ENCODE measurements at regions of chr2 and their contacts with region 1.

Region 1: DNA sequence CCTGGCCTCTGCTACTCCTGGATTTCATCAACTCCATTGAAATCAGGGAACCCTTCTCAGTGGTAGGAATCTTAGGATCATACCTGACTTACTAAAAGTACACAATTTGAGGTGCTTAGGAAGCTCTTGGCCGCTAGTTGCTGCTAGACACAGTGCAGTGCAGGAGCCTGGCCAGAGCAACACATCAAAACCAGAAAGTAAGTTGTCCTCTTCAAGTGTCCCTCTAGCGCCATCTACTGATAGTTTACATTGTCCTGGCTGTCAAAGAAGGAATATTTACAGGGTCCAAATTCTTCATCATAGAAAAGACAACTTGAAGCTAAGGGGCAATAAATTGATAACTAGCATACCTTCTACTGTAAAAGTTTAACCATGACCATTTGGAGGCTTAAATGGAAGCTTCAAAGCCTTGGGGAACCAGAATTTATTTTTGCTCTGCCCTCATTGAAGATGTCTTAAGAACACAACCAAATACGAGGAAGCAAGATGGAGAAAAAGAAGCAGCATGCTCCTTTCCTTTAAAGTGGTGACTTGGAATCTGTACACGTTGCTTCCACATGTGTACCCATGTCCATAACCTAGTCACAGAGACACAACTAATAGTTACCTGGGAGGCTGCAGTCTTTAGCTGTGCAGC is 889.1 kb upstream of the GCFC2 start:
- DNase-seq: peak; percentile 73
- H3K4me3 ChIP-seq: no peak overlapping the region
- H3K27ac ChIP-seq: no peak overlapping the region
- H3K4me1 ChIP-seq: no peaks in the 10 kb centered on the region
- H3K27me3 ChIP-seq: no peaks in the 10 kb centered on the region
- CTCF ChIP-seq: peak; percentile 68 to 71
- POLR2A ChIP-seq: no peak

Region 2: DNA sequence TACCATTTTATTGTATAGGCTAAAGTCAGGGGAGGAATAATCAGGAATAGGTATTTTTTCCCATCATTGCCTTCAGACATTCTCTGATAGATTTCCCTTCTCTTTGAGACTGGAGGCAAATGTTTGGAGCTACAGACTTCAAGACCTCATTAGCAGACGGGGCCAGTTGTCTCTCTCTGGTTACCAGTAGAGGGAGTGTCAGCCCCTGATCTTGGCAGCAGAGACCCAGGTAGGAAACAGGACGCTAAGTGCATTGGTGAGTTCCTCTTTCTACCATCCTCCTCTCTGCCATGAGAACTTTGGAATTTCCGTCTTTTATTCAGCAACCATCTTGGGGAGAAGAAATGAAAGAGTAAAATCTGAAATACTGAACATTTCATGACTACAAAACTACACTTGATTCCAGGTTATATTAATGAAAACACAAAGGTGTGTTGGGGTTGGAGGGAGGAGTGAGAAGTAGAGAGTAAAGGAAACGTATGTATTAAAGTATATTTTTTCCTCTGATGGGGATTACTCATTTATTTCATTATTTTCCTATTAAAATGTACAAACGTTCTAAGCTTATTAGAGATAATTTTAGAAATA is 703.0 kb before region 1 on chr2:
- CTCF ChIA-PET with region 1: no interaction called
- POLR2A ChIA-PET with region 1: no interaction called
- dilution Hi-C with region 1: no loop called
- intact Hi-C with region 1: loop called (anchors 5 kb)
- DNase-seq: peak; percentile 5
- H3K4me3 ChIP-seq: no peak overlapping the region
- H3K27ac ChIP-seq: no peak overlapping the region
- H3K4me1 ChIP-seq: no peaks in the 10 kb centered on the region
- H3K27me3 ChIP-seq: no peaks in the 10 kb centered on the region
- CTCF ChIP-seq: peak; percentile 10 to 45
- POLR2A ChIP-seq: no peak